Posterior cingulate gyrus (tissue), 11 donors: ENCODE measurements at regions of chr15 and their contacts with region 1.

Region 1: DNA sequence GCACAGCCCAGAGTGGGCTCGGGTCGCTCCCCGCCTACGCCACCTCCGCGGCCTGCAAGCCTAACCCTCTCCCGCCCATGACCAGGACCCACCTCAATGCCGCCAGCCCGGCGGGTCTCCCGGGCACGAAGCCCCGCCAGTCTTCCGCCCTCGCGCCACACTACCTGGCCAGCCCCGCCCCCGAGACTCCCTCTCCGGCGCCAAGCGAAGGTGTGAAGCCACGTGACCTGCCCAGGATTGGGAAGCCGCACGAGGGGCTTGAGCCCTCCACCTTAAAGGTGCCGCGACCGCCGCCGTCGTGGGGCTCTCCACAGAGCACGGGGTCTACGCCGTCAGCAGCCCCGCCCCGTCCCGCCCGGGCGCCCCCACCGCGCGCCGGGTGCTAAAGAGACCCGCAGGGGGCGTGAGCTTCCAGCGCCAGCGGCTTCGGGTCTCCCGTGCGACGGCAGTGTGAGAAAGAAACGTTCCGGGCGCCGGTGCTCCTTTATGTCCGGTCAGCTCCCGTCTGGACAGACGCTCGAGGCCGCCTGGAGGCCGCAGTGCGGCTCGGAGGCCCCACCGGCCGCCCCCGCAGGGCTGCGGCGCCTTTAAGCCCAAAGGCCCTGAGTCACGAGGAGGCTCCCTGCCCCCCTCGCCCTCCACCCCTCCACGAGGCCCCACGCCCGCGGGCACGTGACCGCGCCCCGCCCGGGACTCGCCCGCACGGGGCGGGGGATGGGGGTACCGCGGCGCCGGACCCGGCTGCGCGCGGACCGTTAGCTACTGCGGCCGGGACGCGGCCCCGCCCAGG is at the start of gene CPEB1:
- DNase-seq: peak; percentile 56 to 96 (median 70)

Region 2: DNA sequence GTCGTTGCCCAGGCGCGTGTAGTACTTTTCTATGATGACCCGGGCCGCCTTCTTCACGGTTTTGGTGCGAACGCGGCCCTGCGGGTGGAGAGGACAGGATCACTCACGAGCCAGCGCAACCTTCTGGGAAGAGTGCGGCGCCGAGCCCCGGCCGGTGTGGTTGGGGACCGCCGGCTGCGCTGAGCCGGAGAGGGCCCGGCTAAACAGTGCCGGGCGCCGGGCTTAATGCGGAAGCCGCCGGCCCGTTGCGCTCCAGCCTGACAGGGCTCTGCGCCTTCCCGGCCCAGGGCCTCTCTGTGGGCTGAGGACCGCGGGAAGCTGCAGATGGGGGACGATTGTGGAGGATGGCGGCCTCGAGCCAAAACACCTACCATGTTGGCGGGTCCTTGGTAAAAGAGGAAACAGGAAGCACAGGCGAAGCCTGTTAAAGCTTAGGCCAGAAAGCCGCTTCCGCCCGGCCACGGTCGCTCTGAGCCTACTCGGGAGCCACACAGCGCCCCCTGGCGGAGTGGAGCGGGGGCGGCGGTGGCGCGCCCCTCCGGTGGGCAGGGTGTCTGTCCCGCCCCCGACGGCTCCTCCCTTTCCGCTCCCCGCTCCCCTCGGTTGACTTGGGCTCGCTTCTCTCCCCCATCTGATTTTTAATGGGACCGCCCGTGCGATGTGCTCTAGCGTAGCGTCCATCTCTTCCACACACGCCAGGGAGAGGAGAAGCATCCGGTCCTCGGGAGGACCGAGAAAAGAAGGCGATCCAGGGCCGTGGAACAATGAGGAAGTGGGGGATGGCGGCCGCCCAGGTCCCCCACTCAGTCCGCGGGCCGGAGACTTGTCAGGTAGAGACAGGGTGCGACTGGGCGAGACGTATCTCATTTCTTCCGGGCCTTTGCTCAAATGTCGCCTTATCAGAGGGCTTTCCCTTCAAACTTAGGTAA is 106.9 kb before region 1 on chr15 and contains the start of gene RPS17:
- intact Hi-C with region 1: loop called (anchors 5 kb)
- DNase-seq: peak; percentile 88 to 99 (median 94)

Region 3: GRCh38 chr15:82571722-82572222 is 75.5 kb before region 1 on chr15:
- intact Hi-C with region 1: loop called (anchors 2 kb)
- DNase-seq: peak; percentile 76 to 98 (median 87)

Region 4: GRCh38 chr15:82699726-82700125 is 52.5 kb after region 1 on chr15:
- intact Hi-C with region 1: loop called (anchors 10 kb)
- DNase-seq: peak in 1 of 10 donors; percentile 80

Region 5: GRCh38 chr15:82749951-82750830 is 103.0 kb after region 1 on chr15:
- intact Hi-C with region 1: loop called (anchors 5 kb)
- DNase-seq: peak; percentile 91 to 99 (median 94)

Region 6: DNA sequence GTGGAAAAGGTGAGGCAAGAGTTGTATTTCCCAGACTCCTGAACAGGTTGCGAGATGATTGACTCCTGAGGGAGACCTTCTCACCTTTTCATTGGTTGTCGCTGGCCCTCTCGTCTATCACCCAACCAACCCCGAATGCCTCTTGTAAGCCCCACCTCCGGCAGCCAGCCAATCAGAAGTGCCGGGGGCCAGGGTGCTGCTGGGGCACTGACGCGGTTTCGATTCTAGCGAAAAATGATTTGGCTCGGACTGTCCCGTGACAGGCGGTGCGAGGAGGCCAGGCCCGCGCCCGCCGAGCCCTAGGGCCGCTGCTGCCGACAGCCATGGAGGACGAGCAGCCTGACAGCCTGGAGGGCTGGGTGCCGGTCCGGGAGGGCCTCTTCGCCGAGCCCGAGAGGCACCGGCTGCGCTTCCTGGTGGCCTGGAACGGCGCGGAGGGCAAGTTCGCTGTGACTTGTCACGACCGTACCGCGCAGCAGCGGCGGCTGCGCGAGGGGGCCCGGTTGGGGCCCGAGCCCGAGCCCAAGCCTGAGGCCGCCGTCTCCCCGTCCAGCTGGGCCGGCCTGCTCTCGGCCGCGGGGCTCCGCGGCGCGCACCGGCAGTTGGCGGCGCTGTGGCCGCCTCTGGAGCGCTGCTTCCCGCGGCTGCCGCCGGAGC is 162.3 kb after region 1 on chr15 and contains the start of gene WHAMM:
- intact Hi-C with region 1: loop called (anchors 5 kb)
- DNase-seq: peak; percentile 96 to 100 (median 99)